Activated CD8-positive, alpha-beta T cell treated with anti-CD3 and anti-CD28 coated beads, Interleukin-2, amount 10 ng/mL, durations not matched to agents 7 days and 5 days (primary cell): ENCODE measurements at regions of chr11 and their contacts with region 1.

Region 1: GRCh38 chr11:65261591-65262380 is at the start of gene POLA2:
- DNase-seq: peak; percentile 97
- ATAC-seq: peak; percentile 96
- H3K4me3 Mint-ChIP-seq: peak within 1 kb of the TSS; percentile 97
- H3K27ac Mint-ChIP-seq: peak within 1 kb of the TSS; percentile 94
- H3K4me1 Mint-ChIP-seq: peaks cover 61% of the 10 kb centered on the region
- H3K27me3 Mint-ChIP-seq: no peaks in the 10 kb centered on the region
- total RNA-seq, gene POLA2: 63.6 to 76.1 TPM

Region 2: DNA sequence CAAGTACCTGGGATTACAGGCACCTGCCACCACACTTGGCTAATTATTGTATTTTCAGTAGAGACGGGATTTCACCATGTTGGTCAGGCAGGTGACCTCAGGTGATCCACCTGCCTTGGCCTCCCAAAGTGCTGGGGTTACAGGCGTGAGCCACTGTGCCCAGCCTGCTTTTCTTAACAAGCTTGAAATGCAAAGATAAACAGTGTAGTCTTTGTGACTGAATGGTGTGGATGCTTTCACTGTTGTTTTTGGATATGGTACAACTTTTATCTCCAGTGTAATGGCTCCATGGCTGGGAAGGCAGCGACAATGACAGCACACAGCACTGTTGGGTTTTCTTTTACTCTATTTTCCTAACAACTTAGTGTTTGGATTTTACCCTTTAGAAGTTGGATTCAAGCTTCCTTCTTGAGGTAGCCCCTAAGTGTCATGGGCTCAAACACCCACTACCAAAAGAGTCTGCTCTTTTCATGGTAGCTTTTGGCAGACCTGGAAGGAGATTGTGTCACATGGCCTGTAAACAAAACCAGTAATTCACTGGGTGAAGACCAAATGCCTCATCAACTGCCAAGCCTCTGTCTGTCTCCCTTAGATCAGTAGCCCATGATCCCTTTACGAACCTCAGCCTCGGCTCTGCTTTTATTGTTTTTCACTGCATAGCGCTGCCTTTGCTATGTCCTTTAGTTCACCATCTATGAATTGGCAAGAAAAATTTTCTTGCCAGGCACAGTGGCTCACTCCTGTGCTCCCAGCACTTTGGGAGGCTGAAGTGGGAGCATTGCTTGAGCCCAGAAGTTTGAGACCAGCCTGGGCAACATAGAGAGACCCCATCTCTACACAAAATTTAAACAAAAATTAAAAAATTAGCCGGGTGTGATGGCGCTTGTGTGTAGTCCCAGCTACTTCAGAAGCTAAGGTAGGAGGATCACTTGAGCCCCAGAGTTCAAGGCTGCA is 159.4 kb before region 1 on chr11:
- CTCF ChIA-PET with region 1: no interaction called
- POLR2A ChIA-PET with region 1: no interaction called
- DNase-seq: no peak
- ATAC-seq: no peak
- H3K4me3 Mint-ChIP-seq: no peak overlapping the region
- H3K27ac Mint-ChIP-seq: no peak overlapping the region
- H3K4me1 Mint-ChIP-seq: peaks cover 23% of the 10 kb centered on the region
- H3K27me3 Mint-ChIP-seq: no peaks in the 10 kb centered on the region

Region 3: GRCh38 chr11:65117216-65118096 is 144.3 kb before region 1 on chr11 and contains the start of gene ZNHIT2:
- CTCF ChIA-PET with region 1: interaction called, 5 read pairs
- POLR2A ChIA-PET with region 1: interaction called, 12 read pairs
- DNase-seq: peak; percentile 100
- ATAC-seq: peak; percentile 66
- H3K4me3 Mint-ChIP-seq: peak within 1 kb of the TSS; percentile 90
- H3K27ac Mint-ChIP-seq: peak within 1 kb of the TSS; percentile 97
- H3K4me1 Mint-ChIP-seq: peaks cover 63% of the 10 kb centered on the region
- H3K27me3 Mint-ChIP-seq: no peaks in the 10 kb centered on the region
- total RNA-seq, gene ZNHIT2: 11.6 to 12.4 TPM

Region 4: GRCh38 chr11:65213322-65214211 is 48.2 kb before region 1 on chr11:
- CTCF ChIA-PET with region 1: no interaction called
- POLR2A ChIA-PET with region 1: interaction called, 10 read pairs
- DNase-seq: peak; percentile 57
- ATAC-seq: peak; percentile 49
- H3K4me3 Mint-ChIP-seq: no peak overlapping the region
- H3K27ac Mint-ChIP-seq: peak overlapping the region; percentile 67
- H3K4me1 Mint-ChIP-seq: peaks cover 40% of the 10 kb centered on the region
- H3K27me3 Mint-ChIP-seq: peaks cover 5% of the 10 kb centered on the region

Region 5: GRCh38 chr11:65251476-65251875 is 10.3 kb before region 1 on chr11:
- CTCF ChIA-PET with region 1: interaction called, 14 read pairs
- POLR2A ChIA-PET with region 1: interaction called, 6 read pairs
- DNase-seq: no peak
- ATAC-seq: no peak
- H3K4me3 Mint-ChIP-seq: no peak overlapping the region
- H3K27ac Mint-ChIP-seq: no peak overlapping the region
- H3K4me1 Mint-ChIP-seq: no peaks in the 10 kb centered on the region
- H3K27me3 Mint-ChIP-seq: peaks cover 6% of the 10 kb centered on the region

Region 6: DNA sequence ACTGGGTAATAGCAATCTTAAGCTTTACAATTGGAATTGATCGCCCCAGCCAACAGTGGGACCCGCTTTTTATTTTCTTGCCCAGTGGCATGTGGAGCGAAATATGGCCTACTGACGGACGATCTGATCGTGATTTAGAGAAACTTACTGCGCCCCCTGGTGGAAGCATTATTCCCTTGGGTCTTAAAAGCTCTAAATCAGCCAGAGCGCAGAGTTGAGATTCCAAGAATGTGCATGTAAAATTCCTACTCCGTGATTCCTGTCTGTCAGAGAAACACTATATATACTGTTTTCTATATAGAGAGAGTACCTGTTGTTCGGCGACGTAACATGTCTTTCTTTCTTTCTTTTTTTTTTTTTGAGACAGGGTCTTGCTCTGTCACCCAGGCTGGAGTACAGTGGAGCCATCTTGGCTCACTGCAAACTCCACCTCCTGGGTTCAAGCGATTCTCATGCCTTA is 68.2 kb after region 1 on chr11:
- CTCF ChIA-PET with region 1: interaction called, 13 read pairs
- POLR2A ChIA-PET with region 1: interaction called, 5 read pairs
- DNase-seq: peak; percentile 92
- ATAC-seq: no peak
- H3K4me3 Mint-ChIP-seq: no peak overlapping the region
- H3K27ac Mint-ChIP-seq: no peak overlapping the region
- H3K4me1 Mint-ChIP-seq: peaks cover 16% of the 10 kb centered on the region
- H3K27me3 Mint-ChIP-seq: peaks cover 4% of the 10 kb centered on the region

Region 7: DNA sequence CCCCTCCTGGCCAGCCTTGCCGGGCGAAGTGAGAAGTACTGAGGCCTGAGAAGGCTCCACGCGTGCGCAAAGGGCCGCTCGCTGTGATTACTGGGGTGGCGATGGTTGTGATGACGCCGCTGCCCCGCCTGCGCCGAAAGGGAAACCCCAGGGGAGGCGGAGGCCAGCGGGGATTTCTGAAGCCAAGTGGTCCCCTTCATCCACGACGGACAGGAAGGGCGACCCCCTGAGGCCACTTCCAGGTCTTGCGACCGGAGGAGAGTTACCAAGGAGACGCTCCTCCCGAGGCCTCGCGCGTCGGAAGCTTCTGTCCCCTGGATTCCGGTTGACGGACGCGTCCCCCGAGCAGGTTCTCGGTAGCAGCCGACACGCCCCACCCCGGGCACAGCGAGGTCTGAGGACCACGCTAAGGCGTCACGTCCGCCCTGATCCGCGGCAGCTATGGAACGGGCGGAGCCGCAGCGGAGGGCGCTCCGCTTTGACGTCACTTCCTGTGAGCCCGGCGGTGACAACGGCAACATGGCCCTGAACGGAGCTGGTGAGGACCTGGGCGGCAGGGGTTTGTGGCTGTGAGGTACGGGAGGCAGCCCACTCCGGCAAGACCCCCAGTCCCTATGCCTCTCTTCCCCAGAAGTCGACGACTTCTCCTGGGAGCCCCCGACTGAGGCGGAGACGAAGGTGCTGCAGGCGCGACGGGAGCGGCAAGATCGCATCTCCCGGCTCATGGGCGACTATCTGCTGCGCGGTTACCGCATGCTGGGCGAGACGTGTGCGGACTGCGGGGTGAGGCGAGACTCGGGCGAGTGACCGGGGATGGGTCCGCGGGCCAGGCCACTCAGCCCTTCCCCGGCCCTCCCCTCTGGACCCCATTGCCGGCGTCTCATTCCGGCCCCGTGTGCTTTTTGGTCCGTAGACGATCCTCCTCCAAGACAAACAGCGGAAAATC is 308.5 kb after region 1 on chr11 and contains the start of gene ZNRD2:
- CTCF ChIA-PET with region 1: no interaction called
- POLR2A ChIA-PET with region 1: no interaction called
- DNase-seq: peak; percentile 99
- ATAC-seq: peak; percentile 70
- H3K4me3 Mint-ChIP-seq: peak within 1 kb of the TSS; percentile 100
- H3K27ac Mint-ChIP-seq: peak within 1 kb of the TSS; percentile 99
- H3K4me1 Mint-ChIP-seq: peaks cover 71% of the 10 kb centered on the region
- H3K27me3 Mint-ChIP-seq: no peaks in the 10 kb centered on the region
- total RNA-seq, gene ZNRD2: 39.2 to 40.7 TPM